Activated CD4-positive, alpha-beta T cell treated with anti-CD3 and anti-CD28 coated beads, Interleukin-2, amount 10 ng/mL, durations not matched to agents 24 days and 14 days (primary cell): ENCODE measurements at regions of chr3 and their contacts with region 1.

Region 1: DNA sequence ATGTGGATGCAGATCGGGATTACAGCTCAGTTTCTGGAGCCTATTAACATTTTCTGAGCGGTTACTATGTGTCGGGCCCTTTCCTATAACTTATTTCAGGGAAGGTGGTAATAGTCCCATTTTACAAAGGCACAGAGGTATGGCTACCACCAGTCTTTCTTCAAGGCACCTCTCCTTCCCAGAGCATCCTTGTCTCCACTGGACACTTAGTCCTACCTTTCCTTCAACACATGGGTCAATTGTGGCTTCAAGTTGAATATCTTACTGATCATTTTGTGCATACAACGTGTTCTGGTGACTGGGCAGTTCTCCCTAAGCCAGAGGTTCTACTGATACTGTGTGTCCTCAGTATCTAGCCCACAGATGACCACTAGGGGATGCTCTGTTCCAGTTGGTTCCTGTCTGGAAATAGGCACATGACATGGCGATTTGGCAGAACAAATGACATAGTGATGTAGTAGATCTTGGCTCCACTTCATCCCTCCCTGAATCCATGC is 60.7 kb upstream of the CMTM8 start:
- DNase-seq: peak; percentile 86
- H3K4me3 Mint-ChIP-seq: peak overlapping the region; percentile 7
- H3K27ac Mint-ChIP-seq: no peak overlapping the region
- H3K4me1 Mint-ChIP-seq: peaks cover 12% of the 10 kb centered on the region
- H3K27me3 Mint-ChIP-seq: peaks cover 7% of the 10 kb centered on the region

Region 2: GRCh38 chr3:32296256-32297204 is 118.8 kb after region 1 on chr3:
- intact Hi-C with region 1: loop called (anchors 2 kb)
- DNase-seq: peak; percentile 89
- H3K4me3 Mint-ChIP-seq: peak overlapping the region; percentile 16
- H3K27ac Mint-ChIP-seq: peak overlapping the region; percentile 90
- H3K4me1 Mint-ChIP-seq: peaks cover 34% of the 10 kb centered on the region
- H3K27me3 Mint-ChIP-seq: no peaks in the 10 kb centered on the region

Region 3: DNA sequence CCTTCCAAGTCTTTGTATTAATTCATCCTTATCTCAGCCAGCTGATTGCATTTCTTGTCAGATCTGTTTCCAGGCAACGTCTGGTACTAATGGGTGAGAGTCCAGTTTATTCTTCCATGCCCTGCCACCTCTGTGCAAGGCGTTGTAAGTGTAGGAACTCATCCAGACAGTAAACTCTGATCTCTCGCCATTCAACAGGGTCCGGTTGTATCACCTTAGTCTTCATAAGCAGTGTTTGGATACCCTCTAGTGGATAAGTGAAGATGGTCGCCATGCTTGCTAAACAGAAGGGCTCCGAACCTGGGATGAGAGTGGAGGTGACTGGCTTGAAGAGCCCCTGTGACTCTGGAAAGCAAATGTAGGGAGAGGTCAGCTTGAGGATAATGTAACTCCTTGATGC is 162.3 kb after region 1 on chr3:
- intact Hi-C with region 1: loop called (anchors 1 kb)
- DNase-seq: peak; percentile 81
- H3K4me3 Mint-ChIP-seq: no peak overlapping the region
- H3K27ac Mint-ChIP-seq: no peak overlapping the region
- H3K4me1 Mint-ChIP-seq: peaks cover 21% of the 10 kb centered on the region
- H3K27me3 Mint-ChIP-seq: no peaks in the 10 kb centered on the region

Region 4: DNA sequence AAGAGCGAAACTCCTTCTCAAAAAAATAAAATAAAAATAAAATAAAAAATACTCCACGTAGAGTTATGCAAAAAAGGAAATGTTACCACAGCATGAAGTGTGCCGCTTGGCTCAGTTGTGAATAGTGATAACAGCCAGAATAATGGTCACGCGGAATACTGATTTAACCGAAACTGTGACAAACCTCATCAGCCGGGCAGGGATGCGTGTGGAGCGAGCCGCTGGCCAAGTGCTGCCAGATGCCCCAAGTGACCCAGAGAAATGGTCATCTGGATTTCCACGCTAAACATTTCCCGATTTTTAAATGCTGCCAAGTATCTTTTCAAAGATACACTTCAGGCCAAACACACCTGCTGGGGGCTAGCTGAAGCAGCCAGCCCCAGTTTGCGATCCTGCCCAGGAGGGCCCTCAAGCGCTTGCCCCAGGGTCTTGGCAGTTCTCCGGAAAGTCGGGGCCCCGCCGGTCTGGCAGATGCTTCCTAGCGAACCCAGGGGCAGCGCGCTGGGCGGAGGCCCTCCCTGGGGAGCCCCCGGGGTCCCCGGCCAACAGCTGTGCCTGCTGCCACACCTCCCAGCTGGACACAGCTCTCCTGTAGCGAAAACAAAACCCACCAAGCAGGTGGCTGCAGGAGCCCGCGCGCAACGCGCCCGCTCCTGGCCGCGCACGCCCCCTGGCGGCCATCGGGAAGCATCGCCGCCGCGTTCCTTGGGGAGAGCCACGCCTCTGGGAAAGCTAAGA is 289.8 kb after region 1 on chr3:
- intact Hi-C with region 1: loop called (anchors 5 kb)
- DNase-seq: peak; percentile 94
- H3K4me3 Mint-ChIP-seq: no peak overlapping the region
- H3K27ac Mint-ChIP-seq: no peak overlapping the region
- H3K4me1 Mint-ChIP-seq: peaks cover 28% of the 10 kb centered on the region
- H3K27me3 Mint-ChIP-seq: no peaks in the 10 kb centered on the region